Spleen (tissue), 13 donors: ENCODE measurements at regions of chr3 and their contacts with region 1.

Region 1: GRCh38 chr3:25594007-25594502 is 70.7 kb downstream of the TOP2B start:
- DNase-seq: no peak
- H3K4me3 ChIP-seq: no peak overlapping the region
- H3K27ac ChIP-seq: peak overlapping the region in 4 of 8 donors; percentile 1 to 35 (median 7)
- H3K4me1 ChIP-seq: peaks cover 0 to 28% (median 12%) of the 10 kb centered on the region in 6 donors
- H3K27me3 ChIP-seq: no peaks in the 10 kb centered on the region
- CTCF ChIP-seq: peak; percentile 61 to 87 (median 72)
- POLR2A ChIP-seq: no peak

Region 2: DNA sequence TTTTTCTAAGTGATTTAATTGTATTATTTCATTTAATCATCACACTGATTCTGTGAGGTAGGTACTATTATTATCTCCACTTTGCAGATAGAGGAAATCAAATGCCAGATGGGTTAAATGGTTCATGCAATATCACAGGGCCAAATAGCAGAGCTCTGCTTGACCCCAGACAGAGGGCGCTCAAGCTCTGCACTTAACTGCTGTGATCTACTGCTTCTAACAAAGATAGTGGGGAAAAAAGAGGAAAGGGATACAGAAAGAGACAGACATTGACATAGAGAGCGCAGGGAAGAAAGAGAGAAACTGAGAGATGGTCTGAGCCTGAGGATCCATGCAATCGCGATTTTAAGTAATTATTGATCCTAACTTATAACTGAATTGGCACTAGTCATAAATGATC is 820.3 kb before region 1 on chr3:
- intact Hi-C with region 1: loop called (anchors 5 kb)
- DNase-seq: no peak
- H3K4me3 ChIP-seq: no peak overlapping the region
- H3K27ac ChIP-seq: no peak overlapping the region
- H3K4me1 ChIP-seq: no peaks in the 10 kb centered on the region
- H3K27me3 ChIP-seq: no peaks in the 10 kb centered on the region
- CTCF ChIP-seq: peak in 10 of 11 experiments; percentile 21 to 72 (median 52)
- POLR2A ChIP-seq: no peak

Region 3: GRCh38 chr3:24963762-24964625 is 630.1 kb before region 1 on chr3:
- intact Hi-C with region 1: loop called (anchors 10 kb)
- DNase-seq: no peak
- H3K4me3 ChIP-seq: no peak overlapping the region
- H3K27ac ChIP-seq: no peak overlapping the region
- H3K4me1 ChIP-seq: no peaks in the 10 kb centered on the region
- H3K27me3 ChIP-seq: no peaks in the 10 kb centered on the region
- CTCF ChIP-seq: peak in 8 of 11 experiments; percentile 11 to 51 (median 34)
- POLR2A ChIP-seq: no peak